ENCODE measurements at regions of chr11 and their contacts with region 1.

Region 1: GRCh38 chr11:63146581-63146980 is 2.6 kb upstream of the SLC22A24 start:
- DNase-seq: no peak
- ATAC-seq: no peak

Region 2: DNA sequence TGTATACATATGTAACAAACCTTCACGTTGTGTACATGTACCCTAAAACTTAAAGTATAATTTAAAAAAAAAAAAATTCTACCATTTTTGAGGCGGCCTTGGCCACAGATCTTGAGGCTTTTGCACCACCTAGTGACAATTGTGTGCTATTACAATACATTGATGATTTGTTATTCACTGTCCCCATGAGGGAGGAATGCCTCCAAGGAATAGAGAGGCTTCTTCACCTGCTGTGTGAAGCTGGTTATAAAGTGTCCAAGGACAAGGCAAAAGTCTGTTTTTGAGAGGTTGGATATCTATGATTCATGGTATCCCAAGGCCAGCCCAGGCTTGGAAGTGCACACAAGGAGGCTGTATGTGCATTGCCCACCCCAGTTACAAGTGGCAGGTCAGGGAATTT is 66.2 kb after region 1 on chr11:
- intact Hi-C with region 1: loop called (anchors 10 kb)
- DNase-seq: no peak
- ATAC-seq: no peak

Measured in Right ventricle myocardium inferior (tissue), 1 donor.